PC-9 (cell line): ENCODE measurements at regions of chr10 and their contacts with region 1.

Region 1: DNA sequence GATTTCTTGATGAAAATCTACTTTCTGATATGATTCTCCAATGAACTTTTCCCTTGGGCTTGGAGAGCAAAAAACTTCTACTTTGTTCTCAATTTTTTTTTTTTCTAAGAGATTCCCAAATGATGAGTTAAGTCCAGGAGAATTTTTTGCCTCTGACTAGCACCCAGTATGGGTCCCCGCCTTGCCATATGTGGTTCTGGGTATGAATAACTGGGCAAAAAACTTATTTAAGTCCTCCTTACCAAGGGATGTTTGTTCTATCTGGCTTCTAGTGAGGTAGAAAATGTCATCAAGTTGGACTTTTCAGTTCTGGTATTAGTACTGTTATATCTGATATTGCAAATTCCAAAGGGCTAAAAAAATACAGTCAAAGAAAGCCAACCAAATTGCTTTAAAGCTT is 147.8 kb upstream of the LYZL1 start:
- DNase-seq: peak; percentile 40 to 74
- H3K4me3 ChIP-seq: no peak overlapping the region
- H3K27ac ChIP-seq: peak overlapping the region; percentile 32
- H3K4me1 ChIP-seq: peaks cover 19% of the 10 kb centered on the region
- H3K27me3 ChIP-seq: no peaks in the 10 kb centered on the region
- CTCF ChIP-seq: no peak

Region 2: DNA sequence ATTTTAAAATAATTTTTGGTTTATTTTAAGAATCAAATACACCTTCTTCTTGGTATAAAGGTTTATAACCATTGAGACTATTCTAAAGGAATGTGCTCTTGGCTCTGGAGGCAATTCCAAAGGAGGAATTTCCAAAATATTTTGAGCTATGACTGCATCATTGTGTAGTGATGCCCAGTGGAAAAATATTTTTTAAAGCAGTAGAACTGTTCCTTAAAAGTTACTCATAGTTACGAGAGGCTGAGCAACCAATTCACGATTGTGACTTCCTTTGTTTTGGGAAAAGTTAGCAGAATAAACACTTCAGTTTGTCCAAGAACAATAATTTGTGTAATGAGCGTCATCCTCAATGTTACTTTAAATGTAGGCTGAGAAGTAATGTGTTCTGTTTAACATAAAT is 230.1 kb before region 1 on chr10:
- CTCF ChIA-PET with region 1: no interaction called
- POLR2A ChIA-PET with region 1: no interaction called
- intact Hi-C with region 1: no loop called
- DNase-seq: no peak
- H3K4me3 ChIP-seq: no peak overlapping the region
- H3K27ac ChIP-seq: no peak overlapping the region
- H3K4me1 ChIP-seq: no peaks in the 10 kb centered on the region
- H3K27me3 ChIP-seq: 0 out of 2 replicates have a peak, but pooled peaks cover 3% of the 10 kb centered on the region
- CTCF ChIP-seq: no peak

Region 3: GRCh38 chr10:29119374-29119773 is 21.7 kb before region 1 on chr10:
- CTCF ChIA-PET with region 1: no interaction called
- POLR2A ChIA-PET with region 1: no interaction called
- intact Hi-C with region 1: no loop called
- DNase-seq: peak in 1 of 2 experiments; percentile 31
- H3K4me3 ChIP-seq: no peak overlapping the region
- H3K27ac ChIP-seq: peak overlapping the region; percentile 33
- H3K4me1 ChIP-seq: peaks cover 12% of the 10 kb centered on the region; the same call in 1 of the 2 replicates
- H3K27me3 ChIP-seq: no peaks in the 10 kb centered on the region
- CTCF ChIP-seq: peak; percentile 52

Region 4: GRCh38 chr10:29160110-29160669 is 19.1 kb after region 1 on chr10:
- CTCF ChIA-PET with region 1: no interaction called
- POLR2A ChIA-PET with region 1: no interaction called
- intact Hi-C with region 1: loop called (anchors 1 kb)
- DNase-seq: peak; percentile 75 to 83
- H3K4me3 ChIP-seq: no peak overlapping the region
- H3K27ac ChIP-seq: peak overlapping the region; percentile 84
- H3K4me1 ChIP-seq: peaks cover 25% of the 10 kb centered on the region
- H3K27me3 ChIP-seq: no peaks in the 10 kb centered on the region
- CTCF ChIP-seq: no peak

Region 5: DNA sequence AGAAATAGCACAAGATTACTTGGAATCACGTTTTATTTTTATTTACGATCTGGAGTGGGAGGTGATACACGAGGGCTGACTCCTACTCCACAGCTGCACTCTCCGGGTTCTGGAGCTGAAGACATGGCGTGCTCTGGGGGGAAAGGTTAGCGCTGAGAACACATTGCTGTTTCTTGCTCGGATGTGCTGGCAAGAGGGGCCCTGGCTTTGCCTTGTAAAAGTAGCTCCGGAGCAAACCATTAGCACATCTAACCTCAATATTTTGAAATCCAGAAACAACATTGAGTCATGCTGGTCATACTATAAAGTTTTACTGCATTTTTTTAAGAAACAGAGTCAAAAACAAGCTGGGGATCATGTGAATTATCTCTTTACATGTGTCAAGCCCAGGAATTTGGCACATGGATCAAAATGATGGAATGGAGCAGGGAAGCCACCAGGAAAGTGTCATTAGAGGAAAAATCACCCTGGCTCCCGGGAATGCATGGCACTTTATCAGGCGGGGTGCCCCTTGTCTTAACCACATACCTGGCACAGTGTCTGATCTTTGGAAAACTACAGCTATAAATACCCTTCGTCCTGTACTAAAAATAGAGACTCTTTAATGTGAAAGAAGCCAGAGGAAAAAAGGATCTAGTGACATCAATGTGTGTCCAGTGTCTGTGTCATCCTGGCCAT is 116.2 kb after region 1 on chr10:
- CTCF ChIA-PET with region 1: interaction called, 3 read pairs
- POLR2A ChIA-PET with region 1: no interaction called
- intact Hi-C with region 1: loop called (anchors 1 kb)
- DNase-seq: peak; percentile 19 to 81
- H3K4me3 ChIP-seq: peak overlapping the region; percentile 32; the same call in 1 of the 2 replicates
- H3K27ac ChIP-seq: peak overlapping the region; percentile 65
- H3K4me1 ChIP-seq: peaks cover 48% of the 10 kb centered on the region
- H3K27me3 ChIP-seq: no peaks in the 10 kb centered on the region
- CTCF ChIP-seq: no peak

Region 6: GRCh38 chr10:29317423-29318021 is 176.5 kb after region 1 on chr10:
- CTCF ChIA-PET with region 1: no interaction called
- POLR2A ChIA-PET with region 1: no interaction called
- intact Hi-C with region 1: loop called (anchors 1 kb)
- DNase-seq: no peak
- H3K4me3 ChIP-seq: no peak overlapping the region
- H3K27ac ChIP-seq: no peak overlapping the region
- H3K4me1 ChIP-seq: peaks cover 33% of the 10 kb centered on the region
- H3K27me3 ChIP-seq: no peaks in the 10 kb centered on the region
- CTCF ChIP-seq: no peak